ENCODE measurements at regions of chr5 and their contacts with region 1.

Region 1: DNA sequence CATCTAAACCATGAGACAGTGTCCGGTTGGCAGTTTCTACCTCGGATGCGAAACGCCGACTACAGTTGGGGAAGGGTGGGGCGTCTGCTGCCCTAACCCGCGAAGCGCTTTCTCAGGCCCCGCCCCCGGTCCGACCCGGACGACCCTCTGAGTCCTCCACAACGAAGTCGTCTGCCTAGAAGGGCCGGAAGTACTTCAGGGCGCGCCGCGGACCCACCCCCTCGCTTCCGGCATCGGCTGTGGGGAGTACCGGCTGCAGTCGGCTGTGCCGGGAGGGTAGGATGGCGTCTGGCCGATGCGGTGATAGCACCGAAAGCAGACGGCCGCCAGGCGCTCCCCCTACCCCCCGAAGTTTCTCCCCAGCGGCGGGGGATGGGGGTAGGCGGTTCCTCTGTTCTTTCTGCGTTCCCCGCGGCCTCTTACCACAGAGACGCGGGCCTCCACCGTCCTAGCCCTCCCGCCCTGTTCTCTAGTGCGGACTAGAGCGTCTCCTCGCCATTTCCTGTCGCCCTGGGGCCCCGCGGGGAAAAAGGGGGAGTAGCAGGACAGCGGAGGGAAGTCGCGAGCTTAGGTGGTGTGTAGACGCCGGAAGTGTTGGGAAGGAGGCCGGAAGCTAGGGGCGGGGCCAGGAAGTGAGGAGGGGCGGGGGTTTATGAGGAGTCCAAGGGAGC is at the start of gene TRIM41:
- DNase-seq: peak; percentile 98
- H3K4me3 ChIP-seq: peak within 1 kb of the TSS; percentile 81 to 86 (median 85)
- H3K27ac ChIP-seq: peak within 1 kb of the TSS; percentile 91 to 95 (median 95)
- H3K4me1 ChIP-seq: peaks cover 19 to 28% of the 10 kb centered on the region in 2 donors
- H3K27me3 ChIP-seq: no peaks in the 10 kb centered on the region
- CTCF ChIP-seq: peak in 1 of 6 experiments; percentile 6
- POLR2A ChIP-seq: peak; percentile 80 to 89
- total RNA-seq, gene TRIM41: 18.8 to 31.1 (median 22.8) TPM

Region 2: DNA sequence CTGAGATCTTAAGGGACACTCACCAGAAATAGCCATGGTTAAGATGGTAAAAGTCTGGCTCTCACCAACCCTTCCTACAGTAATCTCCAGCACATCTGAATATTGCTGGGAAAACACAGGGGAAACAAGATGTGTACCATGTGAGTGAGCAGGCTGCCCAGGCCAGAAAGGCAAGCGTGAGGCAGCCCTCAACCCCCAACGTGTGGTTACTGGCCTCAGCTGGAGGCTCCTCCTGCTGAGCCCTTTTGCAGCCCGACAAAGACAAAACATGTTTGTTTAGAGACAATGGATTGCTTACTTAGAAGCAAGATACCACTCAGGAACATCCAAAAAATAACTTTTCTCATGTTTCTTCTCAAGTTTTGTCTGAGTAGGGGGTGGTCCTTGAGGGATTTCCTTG is 378.8 kb before region 1 on chr5:
- intact Hi-C with region 1: no loop called
- DNase-seq: no peak
- H3K4me3 ChIP-seq: no peak overlapping the region
- H3K27ac ChIP-seq: no peak overlapping the region
- H3K4me1 ChIP-seq: no peaks in the 10 kb centered on the region
- H3K27me3 ChIP-seq: no peaks in the 10 kb centered on the region
- CTCF ChIP-seq: no peak
- POLR2A ChIP-seq: no peak

Region 3: DNA sequence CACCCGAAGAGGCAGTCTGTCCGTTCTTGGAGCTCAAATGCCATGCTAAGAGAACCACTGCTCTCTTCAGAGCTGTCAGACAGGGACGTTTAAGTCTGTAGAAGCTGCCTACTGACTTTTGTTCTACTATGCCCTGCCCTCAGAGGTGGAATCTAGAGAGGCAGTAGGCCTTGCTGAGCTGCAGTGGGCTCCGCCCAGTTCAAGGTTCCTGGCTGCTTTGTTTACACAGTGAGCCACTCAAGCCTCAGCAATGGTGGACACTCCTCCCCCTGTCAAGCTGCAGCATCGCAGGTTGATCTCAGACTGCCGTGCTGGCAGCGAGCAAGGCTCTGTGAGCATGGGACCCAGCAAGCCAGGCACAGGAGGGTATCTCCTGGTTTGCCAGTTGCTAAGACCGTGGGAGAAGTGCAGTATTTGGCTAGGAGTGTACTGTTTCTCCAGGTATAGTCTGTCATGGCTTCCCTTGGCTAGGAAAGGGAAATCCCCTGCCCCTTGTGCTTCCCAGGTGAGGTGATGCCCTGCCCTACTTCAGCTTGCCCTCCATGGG is 337.2 kb before region 1 on chr5:
- intact Hi-C with region 1: no loop called
- DNase-seq: peak; percentile 85 to 87
- H3K4me3 ChIP-seq: no peak overlapping the region
- H3K27ac ChIP-seq: peak overlapping the region in 1 of 3 donors; percentile 56
- H3K4me1 ChIP-seq: peaks cover 4 to 9% of the 10 kb centered on the region in 2 donors
- H3K27me3 ChIP-seq: no peaks in the 10 kb centered on the region
- CTCF ChIP-seq: no peak
- POLR2A ChIP-seq: no peak

Region 4: DNA sequence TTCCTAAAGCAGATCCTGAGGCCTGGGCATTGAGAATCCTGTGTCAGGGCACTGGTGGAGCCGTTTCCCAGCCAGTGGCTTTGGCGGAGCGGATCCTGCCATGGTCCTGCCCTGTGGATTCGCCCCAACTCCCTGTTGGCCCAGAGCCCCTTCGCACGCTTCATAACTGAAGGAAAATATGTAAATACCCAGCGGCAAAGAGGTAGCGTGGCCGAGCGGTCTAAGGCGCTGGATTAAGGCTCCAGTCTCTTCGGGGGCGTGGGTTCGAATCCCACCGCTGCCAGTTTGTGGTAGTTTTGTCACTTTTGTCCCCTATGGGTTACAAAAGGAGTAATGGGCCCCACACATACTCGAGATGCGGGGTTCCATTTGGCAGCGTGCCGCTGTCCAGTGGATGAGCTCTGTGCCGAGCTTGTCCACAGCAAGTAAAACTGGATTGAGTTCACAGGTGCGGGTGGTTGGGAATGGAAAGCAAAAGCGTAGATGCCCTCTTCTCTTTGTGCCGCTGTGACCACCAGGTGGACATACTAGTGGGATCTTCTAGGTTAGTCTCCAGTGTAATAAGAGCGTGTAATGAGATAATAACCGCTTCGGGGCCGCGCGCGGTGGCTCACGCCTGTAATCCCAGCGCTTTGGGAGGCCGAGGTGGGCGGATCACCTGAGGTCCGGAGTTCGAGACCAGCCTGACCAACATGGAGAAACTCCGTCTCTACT is 35.5 kb before region 1 on chr5:
- intact Hi-C with region 1: loop called (anchors 5 kb)
- DNase-seq: peak; percentile 68 to 81
- H3K4me3 ChIP-seq: peak overlapping the region in 1 of 3 donors; percentile 77
- H3K27ac ChIP-seq: peak overlapping the region in 1 of 3 donors; percentile 19
- H3K4me1 ChIP-seq: peaks cover 5 to 14% of the 10 kb centered on the region in 2 donors
- H3K27me3 ChIP-seq: no peaks in the 10 kb centered on the region
- CTCF ChIP-seq: peak in 1 of 6 experiments; percentile 25
- POLR2A ChIP-seq: no peak

Region 5: GRCh38 chr5:181260387-181261319 is 37.5 kb after region 1 on chr5 and contains the start of gene TRIM52:
- intact Hi-C with region 1: loop called (anchors 2 kb)
- DNase-seq: peak; percentile 85 to 86
- H3K4me3 ChIP-seq: peak within 1 kb of the TSS; percentile 66 to 88 (median 69)
- H3K27ac ChIP-seq: peak within 1 kb of the TSS; percentile 89 to 98 (median 98)
- H3K4me1 ChIP-seq: peaks cover 33 to 48% of the 10 kb centered on the region in 2 donors
- H3K27me3 ChIP-seq: no peaks in the 10 kb centered on the region
- CTCF ChIP-seq: peak in 1 of 6 experiments; percentile 24
- POLR2A ChIP-seq: peak; percentile 37 to 86
- total RNA-seq, gene TRIM52: 14.8 to 30.8 (median 23.8) TPM

Measured in thyroid gland (tissue), 4 donors.